ENCODE measurements at regions of chr10 and their contacts with region 1.

Region 1: DNA sequence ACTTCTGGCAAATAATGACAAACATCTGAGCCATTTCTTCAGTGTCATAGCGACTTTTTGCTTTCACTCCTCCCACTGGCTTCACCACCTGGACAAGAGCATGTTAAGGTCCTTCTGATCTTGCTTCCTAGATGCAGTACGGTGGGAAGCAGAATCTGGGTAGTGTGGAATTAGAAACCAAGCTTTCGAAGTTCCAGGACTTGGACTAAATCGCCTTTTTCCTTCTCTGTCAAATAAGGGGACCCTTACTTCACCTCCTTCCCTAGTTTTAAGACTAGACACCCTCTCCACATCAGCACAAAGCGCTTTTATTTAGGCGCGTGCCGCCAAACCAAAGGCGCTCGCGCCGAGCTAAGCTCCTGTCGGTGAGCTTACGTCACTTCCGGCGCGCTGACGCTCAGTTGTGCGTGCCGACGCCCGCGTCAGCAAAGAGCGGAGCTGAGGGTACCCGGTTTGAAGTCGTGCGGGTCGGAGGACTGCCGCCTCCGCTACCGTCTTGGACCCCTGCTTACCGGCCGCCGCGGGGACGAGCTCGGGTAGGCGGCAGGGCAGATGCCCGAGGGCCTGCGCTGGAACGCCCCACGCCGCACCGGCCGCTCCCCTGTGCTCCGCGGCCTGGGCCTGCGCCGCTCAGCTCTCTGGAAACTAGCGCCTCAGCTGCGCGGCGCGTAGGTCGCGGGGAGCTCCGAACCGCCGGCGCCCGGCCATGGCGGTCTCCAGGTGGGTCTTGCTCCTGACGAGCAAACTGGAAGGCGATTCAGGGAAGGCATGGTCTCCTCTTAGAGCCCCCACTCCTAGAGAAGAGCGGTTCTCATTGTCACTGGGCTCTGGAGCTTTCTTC is at the start of gene BTAF1:
- DNase-seq: peak; percentile 95
- H3K4me3 ChIP-seq: peak within 1 kb of the TSS; percentile 76
- H3K27ac ChIP-seq: peak within 1 kb of the TSS; percentile 94
- H3K4me1 ChIP-seq: peaks cover 6% of the 10 kb centered on the region
- H3K27me3 ChIP-seq: no peaks in the 10 kb centered on the region
- CTCF ChIP-seq: no peak
- total RNA-seq, gene BTAF1: 42.3 and 43.4 TPM in 2 replicates

Region 2: DNA sequence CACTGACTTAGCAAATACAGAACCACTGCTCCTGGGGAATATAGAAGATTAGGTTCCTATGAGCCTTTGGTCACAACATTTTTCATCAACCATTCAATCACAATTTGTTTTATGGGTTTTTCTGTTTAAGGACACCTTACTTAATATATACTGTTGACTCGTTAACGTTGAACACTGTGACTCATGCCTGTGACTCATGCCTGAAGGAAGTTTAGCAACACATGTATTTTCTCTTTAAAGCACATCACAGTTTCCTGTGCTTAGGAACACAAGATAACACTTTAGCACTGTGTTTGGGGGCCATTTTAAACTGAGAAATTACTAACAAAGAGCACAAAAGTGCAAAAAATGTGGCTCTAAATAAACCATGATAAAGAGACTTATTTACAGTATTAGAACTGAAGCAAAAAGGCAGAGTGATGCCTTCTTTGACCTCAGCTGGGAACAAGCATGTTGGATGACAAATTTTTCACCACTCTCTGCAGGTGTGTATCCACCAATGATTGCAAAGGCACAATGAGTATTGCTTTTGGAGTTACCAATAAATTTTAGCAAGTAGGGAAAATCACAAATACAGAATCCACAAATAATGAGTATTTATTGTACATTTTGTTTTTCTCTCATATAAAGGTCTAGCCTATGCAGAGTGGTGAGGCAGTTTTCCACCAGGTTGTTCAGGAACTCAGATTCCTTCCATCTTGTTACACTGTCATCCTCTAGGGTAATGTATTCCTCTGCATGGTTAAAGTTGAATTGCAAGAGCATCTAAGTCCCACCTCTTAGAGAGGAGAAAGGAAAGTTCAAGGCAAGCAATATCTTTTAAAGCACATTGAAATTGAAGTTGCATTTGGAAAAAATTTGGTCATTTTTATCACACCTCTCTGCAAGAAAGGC is 21.6 kb before region 1 on chr10:
- CTCF ChIA-PET with region 1: interaction called, 11 read pairs
- POLR2A ChIA-PET with region 1: no interaction called
- intact Hi-C with region 1: no loop called
- DNase-seq: peak; percentile 81
- H3K4me3 ChIP-seq: no peak overlapping the region
- H3K27ac ChIP-seq: no peak overlapping the region
- H3K4me1 ChIP-seq: peaks cover under 1% of the 10 kb centered on the region
- H3K27me3 ChIP-seq: no peaks in the 10 kb centered on the region
- CTCF ChIP-seq: no peak

Region 3: GRCh38 chr10:92038949-92039348 is 115.4 kb after region 1 on chr10:
- CTCF ChIA-PET with region 1: no interaction called
- POLR2A ChIA-PET with region 1: no interaction called
- intact Hi-C with region 1: no loop called
- DNase-seq: no peak
- H3K4me3 ChIP-seq: no peak overlapping the region
- H3K27ac ChIP-seq: no peak overlapping the region
- H3K4me1 ChIP-seq: no peaks in the 10 kb centered on the region
- H3K27me3 ChIP-seq: no peaks in the 10 kb centered on the region
- CTCF ChIP-seq: no peak

Region 4: GRCh38 chr10:93762979-93763391 is 1839.4 kb after region 1 on chr10:
- CTCF ChIA-PET with region 1: no interaction called
- POLR2A ChIA-PET with region 1: no interaction called
- intact Hi-C with region 1: no loop called
- DNase-seq: no peak
- H3K4me3 ChIP-seq: no peak overlapping the region
- H3K27ac ChIP-seq: no peak overlapping the region
- H3K4me1 ChIP-seq: no peaks in the 10 kb centered on the region
- H3K27me3 ChIP-seq: peaks cover under 1% of the 10 kb centered on the region
- CTCF ChIP-seq: no peak

Measured in A673 (cell line).